Activated B cell treated with CpG ODN at 0.5 μM for 24 hours (primary cell): ENCODE measurements at regions of chr3 and their contacts with region 1.

Region 1: GRCh38 chr3:168095611-168096209 is at the start of gene GOLIM4:
- DNase-seq: peak; percentile 82
- ATAC-seq: peak; percentile 85
- H3K4me3 Mint-ChIP-seq: peak within 1 kb of the TSS; percentile 85
- H3K27ac Mint-ChIP-seq: peak within 1 kb of the TSS; percentile 83
- H3K4me1 Mint-ChIP-seq: peaks cover 25% of the 10 kb centered on the region
- H3K27me3 Mint-ChIP-seq: peaks cover 2% of the 10 kb centered on the region
- CTCF ChIP-seq: no peak
- total RNA-seq, gene GOLIM4: 8.0 and 8.5 TPM in 2 replicates

Region 2: DNA sequence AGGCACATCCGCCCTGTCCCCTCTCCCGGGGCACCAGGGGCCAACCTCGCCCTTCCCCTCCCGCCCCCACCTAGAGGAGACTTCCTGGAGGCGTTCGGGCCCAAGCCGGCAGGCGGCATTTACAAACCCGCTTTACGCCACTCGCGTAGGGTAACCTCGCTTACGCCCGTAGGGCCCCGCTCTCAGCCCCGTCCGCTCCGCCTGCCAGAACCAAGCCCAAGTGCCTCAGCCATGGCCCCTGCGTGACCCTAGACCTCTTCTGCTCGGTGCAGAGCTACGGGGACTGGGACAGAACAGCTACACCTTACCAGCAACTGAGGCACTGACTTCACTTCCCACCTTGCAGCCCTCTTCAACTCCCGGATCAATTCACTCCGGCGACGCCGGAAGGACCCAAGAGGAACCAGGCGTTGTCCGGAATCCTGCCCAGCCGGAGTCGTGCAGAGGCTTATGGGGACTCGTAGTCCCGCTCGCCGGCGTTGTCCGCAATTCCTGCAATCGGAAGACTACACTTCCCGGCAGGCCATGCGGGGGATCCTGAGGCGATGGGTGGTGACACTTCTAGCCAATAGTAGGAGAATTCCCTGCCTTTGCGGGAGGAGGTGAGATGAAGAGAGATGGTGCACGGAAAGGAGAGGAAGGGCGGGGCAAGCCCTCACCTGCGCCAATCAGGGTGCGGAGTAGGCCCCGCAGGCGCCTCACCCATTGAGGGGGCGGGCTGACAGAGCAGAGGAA is 361.0 kb before region 1 on chr3 and contains the start of gene PDCD10:
- CTCF ChIA-PET with region 1: no interaction called
- POLR2A ChIA-PET with region 1: no interaction called
- intact Hi-C with region 1: loop called (anchors 1 kb)
- DNase-seq: peak; percentile 87
- ATAC-seq: peak; percentile 87
- H3K4me3 Mint-ChIP-seq: no peak within 1 kb of the TSS
- H3K27ac Mint-ChIP-seq: no peak within 1 kb of the TSS
- H3K4me1 Mint-ChIP-seq: peaks cover 27% of the 10 kb centered on the region
- H3K27me3 Mint-ChIP-seq: no peaks in the 10 kb centered on the region
- CTCF ChIP-seq: no peak
- total RNA-seq, gene PDCD10: 54.0 and 54.8 TPM in 2 replicates

Region 3: GRCh38 chr3:168047190-168047795 is 48.4 kb before region 1 on chr3:
- CTCF ChIA-PET with region 1: interaction called, 4 read pairs
- POLR2A ChIA-PET with region 1: no interaction called
- intact Hi-C with region 1: loop called (anchors 1 kb)
- DNase-seq: no peak
- ATAC-seq: peak; percentile 76
- H3K4me3 Mint-ChIP-seq: no peak overlapping the region
- H3K27ac Mint-ChIP-seq: no peak overlapping the region
- H3K4me1 Mint-ChIP-seq: peaks cover 4% of the 10 kb centered on the region
- H3K27me3 Mint-ChIP-seq: no peaks in the 10 kb centered on the region
- CTCF ChIP-seq: peak; percentile 88

Region 4: GRCh38 chr3:168134931-168135330 is 39.2 kb after region 1 on chr3:
- CTCF ChIA-PET with region 1: no interaction called
- POLR2A ChIA-PET with region 1: interaction called, 3 read pairs
- intact Hi-C with region 1: loop called (anchors 2 kb)
- DNase-seq: no peak
- ATAC-seq: peak; percentile 54
- H3K4me3 Mint-ChIP-seq: no peak overlapping the region
- H3K27ac Mint-ChIP-seq: no peak overlapping the region
- H3K4me1 Mint-ChIP-seq: no peaks in the 10 kb centered on the region
- H3K27me3 Mint-ChIP-seq: peaks cover 2% of the 10 kb centered on the region
- CTCF ChIP-seq: no peak

Region 5: GRCh38 chr3:168996622-168997021 is 900.9 kb after region 1 on chr3:
- CTCF ChIA-PET with region 1: no interaction called
- POLR2A ChIA-PET with region 1: no interaction called
- intact Hi-C with region 1: no loop called
- DNase-seq: no peak
- ATAC-seq: no peak
- H3K4me3 Mint-ChIP-seq: no peak overlapping the region
- H3K27ac Mint-ChIP-seq: no peak overlapping the region
- H3K4me1 Mint-ChIP-seq: no peaks in the 10 kb centered on the region
- H3K27me3 Mint-ChIP-seq: no peaks in the 10 kb centered on the region
- CTCF ChIP-seq: no peak

Region 6: GRCh38 chr3:169662132-169662842 is 1566.6 kb after region 1 on chr3:
- CTCF ChIA-PET with region 1: no interaction called
- POLR2A ChIA-PET with region 1: no interaction called
- intact Hi-C with region 1: loop called (anchors 5 kb)
- DNase-seq: peak; percentile 46
- ATAC-seq: peak; percentile 72
- H3K4me3 Mint-ChIP-seq: peak overlapping the region; percentile 87
- H3K27ac Mint-ChIP-seq: no peak overlapping the region
- H3K4me1 Mint-ChIP-seq: peaks cover 58% of the 10 kb centered on the region
- H3K27me3 Mint-ChIP-seq: peaks cover 72% of the 10 kb centered on the region
- CTCF ChIP-seq: no peak